ENCODE measurements at regions of chr3 and their contacts with region 1.

Region 1: GRCh38 chr3:14508961-14509795 is 31.0 kb downstream of the GRIP2 start:
- DNase-seq: peak; percentile 89

Region 2: GRCh38 chr3:14548321-14548729 is 39.1 kb after region 1 on chr3:
- intact Hi-C with region 1: loop called (anchors 1 to 5 kb)
- DNase-seq: no peak

Measured in posterior vena cava (tissue), 2 donors.